BJ (cell line): ENCODE measurements at regions of chr6 and their contacts with region 1.

Region 1: GRCh38 chr6:144119376-144119775 is 24.0 kb upstream of the SF3B5 start:
- DNase-seq: no peak
- H3K4me3 ChIP-seq: no peak overlapping the region
- H3K27me3 ChIP-seq: no peaks in the 10 kb centered on the region; the same call in 1 of the 2 replicates
- CTCF ChIP-seq: no peak

Region 2: DNA sequence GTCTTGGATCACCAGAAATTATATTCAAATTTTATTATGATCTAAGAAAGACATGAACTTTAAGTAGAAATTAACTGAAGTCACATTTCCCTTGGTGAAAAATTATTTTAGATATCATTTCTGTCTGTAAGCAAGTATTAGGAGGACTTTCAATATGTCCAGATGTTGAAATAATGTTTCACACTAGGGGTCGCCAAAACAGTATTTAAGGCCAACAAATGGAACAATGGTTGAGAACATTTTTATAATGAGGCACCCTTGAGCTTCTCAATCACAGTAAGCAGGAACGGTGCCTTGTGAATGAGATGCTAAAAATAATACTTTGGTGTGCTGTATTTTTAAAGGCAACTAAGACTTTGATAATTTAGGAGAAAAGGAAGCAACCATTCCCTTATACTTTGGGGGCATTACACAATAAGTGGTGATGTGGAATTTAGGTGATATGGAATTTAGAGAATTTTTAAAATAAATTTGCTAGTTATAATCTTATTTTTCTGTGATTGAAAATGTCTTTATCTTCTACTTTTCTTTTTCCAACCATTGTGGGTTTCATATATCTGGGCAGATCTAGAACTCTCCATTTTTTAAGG is 14.4 kb before region 1 on chr6:
- CTCF ChIA-PET with region 1: no interaction called
- POLR2A ChIA-PET with region 1: no interaction called
- DNase-seq: peak; percentile 21
- H3K4me3 ChIP-seq: no peak overlapping the region
- H3K27me3 ChIP-seq: no peaks in the 10 kb centered on the region; the same call in 1 of the 2 replicates
- CTCF ChIP-seq: peak; percentile 62

Region 3: DNA sequence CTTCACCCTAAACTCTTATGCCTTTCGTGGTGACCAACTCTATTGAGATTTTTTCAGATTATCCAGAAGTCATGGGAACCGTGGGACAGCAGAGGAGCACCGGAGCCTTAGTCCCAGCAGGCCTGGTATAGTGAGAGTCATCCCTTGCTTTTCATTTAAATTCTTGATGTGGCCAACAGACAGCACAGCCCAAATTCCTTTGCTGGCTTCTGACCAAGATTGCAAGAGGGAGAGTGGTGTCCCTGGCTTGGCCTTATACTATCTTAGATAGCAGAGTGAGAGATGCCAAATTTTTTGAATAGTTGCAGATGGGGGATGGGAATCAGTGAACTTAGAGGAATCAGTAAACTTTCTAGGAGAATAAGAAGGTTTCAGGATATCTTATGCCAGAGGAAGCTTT is 38.8 kb after region 1 on chr6:
- CTCF ChIA-PET with region 1: no interaction called
- POLR2A ChIA-PET with region 1: no interaction called
- DNase-seq: peak; percentile 76
- H3K4me3 ChIP-seq: no peak overlapping the region
- H3K27me3 ChIP-seq: no peaks in the 10 kb centered on the region
- CTCF ChIP-seq: no peak

Region 4: DNA sequence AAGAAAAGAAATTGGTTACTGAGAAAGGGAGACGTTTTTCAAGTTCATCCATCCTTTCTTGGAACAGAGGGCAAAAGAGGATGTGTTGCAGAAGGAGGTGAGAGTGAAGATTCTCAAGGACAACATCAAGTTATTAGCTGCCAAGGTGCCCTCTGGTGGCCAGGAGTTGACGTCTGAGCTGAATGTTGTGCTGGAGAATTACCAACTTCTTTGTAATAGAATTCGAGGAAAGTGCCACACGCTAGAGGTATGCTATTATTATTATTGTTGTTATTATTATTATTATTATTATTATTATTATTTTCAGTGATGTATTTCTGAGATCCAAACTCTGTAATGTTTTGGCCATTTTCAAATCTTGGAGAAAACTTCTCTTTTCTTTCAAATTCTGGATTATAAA is 362.8 kb after region 1 on chr6:
- CTCF ChIA-PET with region 1: no interaction called
- POLR2A ChIA-PET with region 1: interaction called, 14 read pairs
- DNase-seq: peak; percentile 17
- H3K4me3 ChIP-seq: no peak overlapping the region
- H3K27me3 ChIP-seq: no peaks in the 10 kb centered on the region
- CTCF ChIP-seq: peak; percentile 68

Region 5: DNA sequence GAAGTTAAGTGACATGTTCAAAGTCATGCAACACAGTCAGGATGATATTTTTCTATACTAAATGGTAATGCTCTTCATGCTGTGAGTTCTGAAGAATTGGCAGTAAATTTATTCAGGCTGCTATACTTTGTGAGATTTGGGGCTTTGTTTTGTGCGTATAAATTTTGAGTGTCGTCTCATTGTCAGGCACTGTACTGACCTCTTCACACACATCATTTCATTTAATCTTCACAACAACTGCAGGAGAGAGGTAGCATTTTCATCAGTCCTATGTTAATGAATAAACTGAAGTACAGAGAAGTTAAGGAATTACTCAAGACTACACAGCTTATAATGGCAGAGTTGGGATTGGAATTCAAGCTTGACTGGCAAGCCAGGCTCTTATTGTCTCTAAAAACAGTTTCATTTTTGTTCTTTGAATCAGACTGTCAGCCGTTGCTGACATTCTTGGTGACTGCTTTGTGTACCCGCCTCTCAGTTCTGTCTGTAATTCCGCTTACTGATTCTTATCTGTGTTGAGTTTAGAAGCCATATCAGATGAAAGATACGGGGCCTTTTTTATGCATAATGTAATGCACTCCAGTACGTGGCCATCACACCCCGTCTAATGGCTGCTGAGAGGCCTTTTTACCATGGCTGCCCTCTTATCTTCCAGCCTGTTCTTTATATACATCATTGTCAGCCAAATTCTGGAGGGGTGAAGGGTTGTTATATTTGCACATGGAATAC is 440.7 kb after region 1 on chr6:
- CTCF ChIA-PET with region 1: no interaction called
- POLR2A ChIA-PET with region 1: no interaction called
- DNase-seq: no peak
- H3K4me3 ChIP-seq: no peak overlapping the region
- H3K27me3 ChIP-seq: no peaks in the 10 kb centered on the region
- CTCF ChIP-seq: no peak